Vagina (tissue), 2 donors: ENCODE measurements at regions of chr1 and their contacts with region 1.

Region 1: GRCh38 chr1:116971258-116971860 is 30.2 kb upstream of the CD101 start:
- DNase-seq: no peak
- H3K4me3 ChIP-seq: no peak overlapping the region
- H3K27ac ChIP-seq: no peak overlapping the region
- H3K4me1 ChIP-seq: no peaks in the 10 kb centered on the region
- H3K27me3 ChIP-seq: no peaks in the 10 kb centered on the region
- CTCF ChIP-seq: no peak
- POLR2A ChIP-seq: no peak

Region 2: GRCh38 chr1:116934586-116935207 is 36.7 kb before region 1 on chr1:
- intact Hi-C with region 1: loop called (anchors 1 kb)
- DNase-seq: no peak
- H3K4me3 ChIP-seq: no peak overlapping the region
- H3K27ac ChIP-seq: no peak overlapping the region
- H3K4me1 ChIP-seq: peaks cover 5% of the 10 kb centered on the region
- H3K27me3 ChIP-seq: no peaks in the 10 kb centered on the region
- CTCF ChIP-seq: no peak
- POLR2A ChIP-seq: no peak